ENCODE measurements at regions of chr6 and their contacts with region 1.

Region 1: GRCh38 chr6:158026054-158026900 is 44.6 kb downstream of the SYNJ2 start:
- DNase-seq: peak; percentile 82 to 95 (median 85)
- H3K4me3 ChIP-seq: peak overlapping the region in 1 of 2 donors; percentile 26
- H3K4me3 Mint-ChIP-seq: peak overlapping the region; percentile 84 to 92 (median 88)
- H3K27ac ChIP-seq: peak overlapping the region; percentile 75
- H3K27ac Mint-ChIP-seq: peak overlapping the region; percentile 97 to 99 (median 98)
- H3K4me1 ChIP-seq: peaks cover 47% of the 10 kb centered on the region
- H3K4me1 Mint-ChIP-seq: peaks cover 25 to 63% (median 32%) of the 10 kb centered on the region in 4 donors
- H3K27me3 ChIP-seq: no peaks in the 10 kb centered on the region
- H3K27me3 Mint-ChIP-seq: no peaks in the 10 kb centered on the region

Region 2: GRCh38 chr6:157937916-157938315 is 88.4 kb before region 1 on chr6:
- CTCF ChIA-PET with region 1: interaction called, 3 read pairs
- POLR2A ChIA-PET with region 1: no interaction called
- intact Hi-C with region 1: loop called (anchors 10 kb)
- DNase-seq: no peak
- H3K4me3 ChIP-seq: no peak overlapping the region
- H3K4me3 Mint-ChIP-seq: no peak overlapping the region
- H3K27ac ChIP-seq: no peak overlapping the region
- H3K27ac Mint-ChIP-seq: no peak overlapping the region
- H3K4me1 ChIP-seq: no peaks in the 10 kb centered on the region
- H3K4me1 Mint-ChIP-seq: peaks cover 0 to 5% (median 2%) of the 10 kb centered on the region in 4 donors
- H3K27me3 ChIP-seq: no peaks in the 10 kb centered on the region
- H3K27me3 Mint-ChIP-seq: no peaks in the 10 kb centered on the region

Region 3: GRCh38 chr6:157981395-157982296 is 44.6 kb before region 1 on chr6 and contains the start of gene SYNJ2:
- CTCF ChIA-PET with region 1: interaction called, 48 read pairs
- POLR2A ChIA-PET with region 1: interaction called, 44 read pairs
- intact Hi-C with region 1: loop called (anchors 1 kb)
- DNase-seq: peak; percentile 86 to 89 (median 87)
- H3K4me3 ChIP-seq: peak within 1 kb of the TSS; percentile 76 to 88
- H3K4me3 Mint-ChIP-seq: peak within 1 kb of the TSS; percentile 88 to 94 (median 92)
- H3K27ac ChIP-seq: peak within 1 kb of the TSS; percentile 71
- H3K27ac Mint-ChIP-seq: peak within 1 kb of the TSS; percentile 85 to 93 (median 90)
- H3K4me1 ChIP-seq: peaks cover 44% of the 10 kb centered on the region
- H3K4me1 Mint-ChIP-seq: peaks cover 24 to 53% (median 39%) of the 10 kb centered on the region in 4 donors
- H3K27me3 ChIP-seq: no peaks in the 10 kb centered on the region
- H3K27me3 Mint-ChIP-seq: no peaks in the 10 kb centered on the region
- total RNA-seq, gene SYNJ2: 17.2 to 17.4 TPM

Region 4: DNA sequence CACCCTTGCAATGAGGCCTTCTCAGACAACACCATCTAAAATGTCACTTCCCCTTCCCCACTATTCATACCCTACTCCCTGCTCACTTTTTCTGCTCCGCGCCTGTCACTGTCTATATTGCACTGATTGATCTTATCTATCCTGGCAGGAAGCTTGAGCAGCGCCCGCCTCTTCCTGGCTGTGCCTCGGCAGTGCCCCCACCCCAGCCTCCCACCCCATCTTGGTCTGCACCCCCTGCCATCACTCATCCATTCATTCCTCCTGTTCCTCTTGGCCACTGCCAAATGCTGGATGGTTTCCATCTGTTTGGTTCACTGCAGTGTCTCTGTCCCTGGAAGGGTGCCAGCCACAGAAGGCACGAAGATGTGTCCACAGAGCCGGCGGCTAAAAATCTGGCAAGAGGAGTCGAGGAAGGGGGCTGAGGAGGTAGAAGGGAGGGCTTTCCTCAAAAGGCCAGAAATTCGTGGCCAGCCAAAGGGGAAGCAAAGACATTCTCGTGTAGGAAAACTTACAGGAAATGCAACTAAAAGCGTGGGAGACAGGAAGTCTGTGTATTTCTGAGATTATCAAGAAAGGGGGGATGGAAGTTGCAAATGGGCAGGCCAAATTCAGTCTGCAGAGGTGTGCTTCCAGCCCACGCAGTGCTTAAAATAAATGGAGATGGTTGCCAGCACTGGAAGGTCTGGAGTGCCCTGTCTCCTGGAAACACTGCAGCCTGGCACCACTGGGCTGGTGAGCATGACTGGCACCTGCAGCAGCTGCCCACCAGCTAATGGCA is 17.0 kb before region 1 on chr6:
- CTCF ChIA-PET with region 1: interaction called, 93 read pairs
- POLR2A ChIA-PET with region 1: interaction called, 27 read pairs
- intact Hi-C with region 1: loop called (anchors 1 kb)
- DNase-seq: peak; percentile 37 to 67 (median 39)
- H3K4me3 ChIP-seq: peak overlapping the region; percentile 46 to 58
- H3K4me3 Mint-ChIP-seq: peak overlapping the region; percentile 70 to 94 (median 83)
- H3K27ac ChIP-seq: peak overlapping the region; percentile 36
- H3K27ac Mint-ChIP-seq: peak overlapping the region; percentile 79 to 98 (median 96)
- H3K4me1 ChIP-seq: peaks cover 54% of the 10 kb centered on the region
- H3K4me1 Mint-ChIP-seq: peaks cover 64 to 90% (median 78%) of the 10 kb centered on the region in 4 donors
- H3K27me3 ChIP-seq: no peaks in the 10 kb centered on the region
- H3K27me3 Mint-ChIP-seq: no peaks in the 10 kb centered on the region

Region 5: DNA sequence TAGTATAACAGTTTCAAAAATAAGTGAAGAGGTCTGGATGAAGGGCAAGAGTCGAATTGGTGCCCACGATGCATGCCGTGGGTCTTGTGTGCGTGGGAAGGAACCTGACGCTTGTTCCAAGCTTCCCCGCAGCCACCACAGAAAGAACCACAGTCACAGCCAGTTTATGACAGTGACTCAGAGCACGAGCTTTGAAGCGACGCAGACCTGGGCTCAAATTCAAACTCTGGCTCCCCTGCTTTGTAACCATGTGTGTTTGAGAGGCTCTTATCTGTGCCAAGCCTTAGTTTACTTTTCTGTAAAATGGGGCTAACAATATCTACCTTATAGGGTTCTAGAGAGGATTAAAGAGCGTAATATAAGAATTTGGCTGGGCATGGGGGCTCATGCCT is 20.8 kb after region 1 on chr6:
- CTCF ChIA-PET with region 1: interaction called, 32 read pairs
- POLR2A ChIA-PET with region 1: interaction called, 5 read pairs
- intact Hi-C with region 1: no loop called
- DNase-seq: peak in 2 of 5 donors; percentile 26 to 31
- H3K4me3 ChIP-seq: no peak overlapping the region
- H3K4me3 Mint-ChIP-seq: peak overlapping the region in 3 of 8 donors; percentile 9 to 71 (median 13)
- H3K27ac ChIP-seq: no peak overlapping the region
- H3K27ac Mint-ChIP-seq: peak overlapping the region in 6 of 7 donors; percentile 17 to 87 (median 81)
- H3K4me1 ChIP-seq: peaks cover 13% of the 10 kb centered on the region
- H3K4me1 Mint-ChIP-seq: peaks cover 7 to 29% (median 21%) of the 10 kb centered on the region in 4 donors
- H3K27me3 ChIP-seq: no peaks in the 10 kb centered on the region
- H3K27me3 Mint-ChIP-seq: no peaks in the 10 kb centered on the region

Region 6: GRCh38 chr6:158303210-158303731 is 277.0 kb after region 1 on chr6:
- CTCF ChIA-PET with region 1: no interaction called
- POLR2A ChIA-PET with region 1: no interaction called
- intact Hi-C with region 1: no loop called
- DNase-seq: no peak
- H3K4me3 ChIP-seq: no peak overlapping the region
- H3K4me3 Mint-ChIP-seq: no peak overlapping the region
- H3K27ac ChIP-seq: no peak overlapping the region
- H3K27ac Mint-ChIP-seq: no peak overlapping the region
- H3K4me1 ChIP-seq: no peaks in the 10 kb centered on the region
- H3K4me1 Mint-ChIP-seq: peaks cover 0 to 4% (median 2%) of the 10 kb centered on the region in 4 donors
- H3K27me3 ChIP-seq: no peaks in the 10 kb centered on the region
- H3K27me3 Mint-ChIP-seq: no peaks in the 10 kb centered on the region

Region 7: DNA sequence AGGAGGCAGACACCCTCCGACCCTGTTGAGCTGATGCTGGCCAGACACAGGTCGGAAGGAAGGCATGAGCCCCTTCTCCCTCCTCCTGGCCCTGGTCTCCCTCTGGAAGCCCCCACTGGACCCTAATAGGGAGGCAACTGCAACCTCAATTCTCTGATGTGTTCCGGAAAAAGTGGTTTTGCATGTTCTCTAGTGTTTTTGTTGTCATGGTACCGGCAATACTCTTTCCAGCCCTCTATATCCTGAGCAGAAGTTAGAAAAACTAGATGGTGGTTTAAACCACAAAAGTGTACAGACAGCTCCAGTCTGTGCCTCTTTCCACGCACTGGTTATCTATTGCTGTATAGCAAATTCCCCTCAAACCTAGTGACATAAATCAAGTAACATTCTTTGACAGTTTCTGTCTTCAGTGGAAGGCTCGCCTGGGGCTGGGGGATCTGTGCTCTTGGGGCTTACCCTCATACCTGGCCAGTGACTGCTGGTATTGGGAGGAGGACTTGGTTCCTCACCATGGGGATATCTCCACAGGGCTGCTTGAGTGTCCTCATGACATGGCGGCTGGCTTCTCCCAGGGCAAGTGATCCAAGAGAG is 660.6 kb after region 1 on chr6:
- CTCF ChIA-PET with region 1: no interaction called
- POLR2A ChIA-PET with region 1: no interaction called
- intact Hi-C with region 1: no loop called
- DNase-seq: peak; percentile 84 to 92 (median 87)
- H3K4me3 ChIP-seq: peak overlapping the region in 1 of 2 donors; percentile 25
- H3K4me3 Mint-ChIP-seq: peak overlapping the region; percentile 53 to 91 (median 80)
- H3K27ac ChIP-seq: peak overlapping the region; percentile 85
- H3K27ac Mint-ChIP-seq: peak overlapping the region; percentile 98 to 100 (median 100)
- H3K4me1 ChIP-seq: peaks cover 65% of the 10 kb centered on the region
- H3K4me1 Mint-ChIP-seq: peaks cover 43 to 77% (median 58%) of the 10 kb centered on the region in 4 donors
- H3K27me3 ChIP-seq: no peaks in the 10 kb centered on the region
- H3K27me3 Mint-ChIP-seq: no peaks in the 10 kb centered on the region